T-cell (primary cell): ENCODE measurements at regions of chr22 and their contacts with region 1.

Region 1: GRCh38 chr22:20429254-20430100 is 8.1 kb downstream of the SCARF2 start:
- DNase-seq: peak; percentile 45 to 88 (median 72)
- ATAC-seq: peak; percentile 71 to 81 (median 76)
- H3K4me3 ChIP-seq: peak overlapping the region; percentile 71 to 80
- H3K4me3 Mint-ChIP-seq: peak overlapping the region; percentile 75 to 89 (median 81)
- H3K27ac ChIP-seq: no peak overlapping the region
- H3K27ac Mint-ChIP-seq: peak overlapping the region in 1 of 2 donors; percentile 44
- H3K4me1 ChIP-seq: peaks cover 17 to 50% of the 10 kb centered on the region in 2 experiments
- H3K4me1 Mint-ChIP-seq: peaks cover 17 to 32% (median 18%) of the 10 kb centered on the region in 3 donors
- H3K27me3 ChIP-seq: peaks cover 14 to 83% of the 10 kb centered on the region in 2 experiments
- H3K27me3 Mint-ChIP-seq: peaks cover 6 to 35% of the 10 kb centered on the region in 2 donors

Region 2: DNA sequence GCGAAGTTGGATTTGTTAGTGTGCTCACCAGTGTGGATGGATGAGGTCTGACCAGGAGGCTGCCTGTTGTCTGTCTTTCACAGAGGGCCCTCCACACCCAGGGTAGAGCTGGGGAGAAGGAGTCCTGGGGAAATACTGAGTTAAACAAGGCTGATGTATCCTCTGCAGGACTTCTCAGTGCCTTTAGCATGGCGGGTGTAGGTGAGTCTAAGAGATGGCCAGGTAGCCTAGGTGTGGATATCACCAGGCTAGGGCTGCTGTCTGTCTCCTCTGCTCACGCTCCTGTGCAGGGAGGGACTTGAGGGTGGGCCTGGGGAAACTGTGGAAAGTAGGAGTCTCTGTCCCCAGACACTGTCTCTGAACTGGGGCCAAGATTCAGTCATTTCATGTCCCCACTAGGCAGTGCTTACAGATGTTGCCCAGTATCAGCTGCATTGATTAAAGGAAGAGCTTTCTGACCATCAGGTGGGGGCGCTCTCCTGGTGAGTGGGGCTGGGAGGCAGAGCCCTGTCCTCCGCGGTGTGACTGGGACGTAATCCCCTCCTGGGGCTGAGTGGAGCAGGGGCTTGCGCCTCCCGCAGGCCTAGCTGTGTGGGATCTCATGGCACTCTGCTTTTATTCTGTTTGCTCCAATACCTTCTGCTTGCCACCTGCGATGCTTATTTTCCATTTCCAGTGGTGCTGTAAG is 243.2 kb before region 1 on chr22:
- CTCF ChIA-PET with region 1: no interaction called
- POLR2A ChIA-PET with region 1: no interaction called
- DNase-seq: no peak
- ATAC-seq: no peak
- H3K4me3 ChIP-seq: no peak overlapping the region
- H3K4me3 Mint-ChIP-seq: no peak overlapping the region
- H3K27ac ChIP-seq: no peak overlapping the region
- H3K27ac Mint-ChIP-seq: no peak overlapping the region
- H3K4me1 ChIP-seq: no peaks in the 10 kb centered on the region
- H3K4me1 Mint-ChIP-seq: no peaks in the 10 kb centered on the region
- H3K27me3 ChIP-seq: peaks cover 0 to 10% of the 10 kb centered on the region in 2 experiments
- H3K27me3 Mint-ChIP-seq: peaks cover 0 to 3% of the 10 kb centered on the region in 2 donors

Region 3: GRCh38 chr22:20324139-20324516 is 105.3 kb before region 1 on chr22:
- CTCF ChIA-PET with region 1: interaction called in 1 of 2 experiments, 10 read pairs
- POLR2A ChIA-PET with region 1: no interaction called
- DNase-seq: peak in 12 of 35 experiments; percentile 8 to 58 (median 28)
- ATAC-seq: peak in 2 of 4 experiments; percentile 18 to 35
- H3K4me3 ChIP-seq: no peak overlapping the region
- H3K4me3 Mint-ChIP-seq: peak overlapping the region in 1 of 3 donors; percentile 62
- H3K27ac ChIP-seq: no peak overlapping the region
- H3K27ac Mint-ChIP-seq: peak overlapping the region; percentile 90 to 92
- H3K4me1 ChIP-seq: peaks cover 21 to 51% of the 10 kb centered on the region in 2 experiments
- H3K4me1 Mint-ChIP-seq: peaks cover 43 to 56% (median 54%) of the 10 kb centered on the region in 3 donors
- H3K27me3 ChIP-seq: no peaks in the 10 kb centered on the region
- H3K27me3 Mint-ChIP-seq: no peaks in the 10 kb centered on the region

Region 4: GRCh38 chr22:20463324-20464095 is 34.0 kb after region 1 on chr22:
- CTCF ChIA-PET with region 1: interaction called in 1 of 2 experiments, 12 read pairs
- POLR2A ChIA-PET with region 1: interaction called, 5 to 6 read pairs
- DNase-seq: peak; percentile 7 to 68 (median 45)
- ATAC-seq: peak; percentile 70 to 79 (median 75)
- H3K4me3 ChIP-seq: peak overlapping the region; percentile 16 to 29
- H3K4me3 Mint-ChIP-seq: peak overlapping the region; percentile 54 to 68 (median 58)
- H3K27ac ChIP-seq: peak overlapping the region; percentile 99
- H3K27ac Mint-ChIP-seq: peak overlapping the region; percentile 99 to 100
- H3K4me1 ChIP-seq: peaks cover 40 to 74% of the 10 kb centered on the region in 2 experiments
- H3K4me1 Mint-ChIP-seq: peaks cover 64 to 74% (median 69%) of the 10 kb centered on the region in 3 donors
- H3K27me3 ChIP-seq: no peaks in the 10 kb centered on the region
- H3K27me3 Mint-ChIP-seq: no peaks in the 10 kb centered on the region